HEK293 (cell line): ENCODE measurements at regions of chr14 and their contacts with region 1.

Region 1: DNA sequence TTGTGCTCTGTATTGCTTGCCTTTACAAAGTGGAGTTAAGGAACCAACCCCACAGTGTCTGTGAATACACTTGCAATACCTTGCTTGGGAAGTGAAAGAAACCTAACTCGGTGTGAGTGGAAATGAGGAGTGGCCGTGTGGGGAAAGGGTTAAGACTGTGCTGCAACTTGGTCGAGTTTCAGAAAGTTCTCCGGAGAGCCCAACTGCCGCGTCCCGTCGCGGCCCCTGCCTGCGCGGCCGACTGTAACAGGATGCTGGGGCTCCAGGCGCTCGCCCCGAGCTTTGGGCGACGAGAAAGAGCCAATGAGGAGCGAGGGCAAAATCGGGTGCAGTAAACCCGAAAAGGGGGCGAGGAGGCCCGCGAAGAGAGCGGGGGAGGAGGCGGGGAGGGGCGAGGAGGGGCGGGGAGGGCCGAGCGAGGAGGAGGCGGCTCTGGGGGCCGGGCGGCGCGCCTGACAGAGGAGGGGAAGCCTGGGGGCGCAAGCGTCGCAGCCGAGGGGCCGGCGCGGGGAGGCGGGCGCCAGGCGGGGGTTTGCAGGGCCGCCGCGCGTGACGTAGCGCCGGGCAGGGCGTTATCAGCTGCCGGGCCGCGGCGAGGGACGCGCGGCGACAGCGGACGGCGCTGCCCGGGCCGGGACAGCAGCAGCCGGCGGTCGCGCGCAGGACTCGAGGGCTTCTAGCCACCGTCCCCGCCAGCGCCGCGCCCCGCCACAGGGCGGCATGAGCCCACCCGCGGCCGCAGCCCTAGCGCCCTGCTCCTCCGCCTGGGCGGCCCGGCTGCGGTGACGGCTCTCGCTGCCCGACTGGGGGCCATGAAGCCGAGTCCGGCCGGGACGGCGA is at the start of gene DACT1:
- H3K4me3 ChIP-seq: peak within 1 kb of the TSS; percentile 71
- H3K27ac ChIP-seq: peak within 1 kb of the TSS; percentile 100
- H3K4me1 ChIP-seq: peaks cover 24% of the 10 kb centered on the region
- CTCF ChIP-seq: no peak

Region 2: GRCh38 chr14:58607946-58608306 is 29.7 kb before region 1 on chr14:
- CTCF ChIA-PET with region 1: no interaction called
- POLR2A ChIA-PET with region 1: no interaction called
- H3K4me3 ChIP-seq: no peak overlapping the region
- H3K27ac ChIP-seq: no peak overlapping the region
- H3K4me1 ChIP-seq: no peaks in the 10 kb centered on the region
- CTCF ChIP-seq: no peak

Region 3: DNA sequence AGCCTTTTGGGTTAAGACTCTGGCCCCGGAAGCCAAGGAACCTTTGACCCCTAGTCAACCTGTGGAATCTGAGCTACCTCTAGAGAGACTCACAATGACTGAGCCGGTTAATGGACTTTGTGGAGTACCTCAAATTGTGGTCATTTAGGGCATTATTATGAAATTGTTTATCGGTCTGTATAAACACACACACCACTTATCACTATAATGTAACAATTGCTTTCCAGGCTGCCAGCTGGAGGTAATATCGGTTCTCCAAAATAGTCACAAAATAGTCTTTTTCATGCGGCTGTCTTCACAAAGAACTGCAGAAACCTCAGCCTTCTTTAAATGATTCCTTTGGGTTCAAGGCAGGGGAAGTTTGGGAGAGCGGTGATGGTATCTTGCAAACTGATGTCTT is 144.4 kb after region 1 on chr14:
- CTCF ChIA-PET with region 1: no interaction called
- POLR2A ChIA-PET with region 1: no interaction called
- H3K4me3 ChIP-seq: no peak overlapping the region
- H3K27ac ChIP-seq: no peak overlapping the region
- H3K4me1 ChIP-seq: peaks cover 7% of the 10 kb centered on the region
- CTCF ChIP-seq: no peak

Region 4: GRCh38 chr14:58829594-58829993 is 192.0 kb after region 1 on chr14:
- CTCF ChIA-PET with region 1: interaction called, 10 read pairs
- POLR2A ChIA-PET with region 1: no interaction called
- H3K4me3 ChIP-seq: no peak overlapping the region
- H3K27ac ChIP-seq: peak overlapping the region; percentile 71
- H3K4me1 ChIP-seq: peaks cover 17% of the 10 kb centered on the region
- CTCF ChIP-seq: no peak

Region 5: GRCh38 chr14:59020382-59020781 is 382.8 kb after region 1 on chr14:
- CTCF ChIA-PET with region 1: interaction called, 10 read pairs
- POLR2A ChIA-PET with region 1: no interaction called
- H3K4me3 ChIP-seq: no peak overlapping the region
- H3K27ac ChIP-seq: no peak overlapping the region
- H3K4me1 ChIP-seq: no peaks in the 10 kb centered on the region; the same call in 1 of the 2 replicates
- CTCF ChIP-seq: no peak

Region 6: DNA sequence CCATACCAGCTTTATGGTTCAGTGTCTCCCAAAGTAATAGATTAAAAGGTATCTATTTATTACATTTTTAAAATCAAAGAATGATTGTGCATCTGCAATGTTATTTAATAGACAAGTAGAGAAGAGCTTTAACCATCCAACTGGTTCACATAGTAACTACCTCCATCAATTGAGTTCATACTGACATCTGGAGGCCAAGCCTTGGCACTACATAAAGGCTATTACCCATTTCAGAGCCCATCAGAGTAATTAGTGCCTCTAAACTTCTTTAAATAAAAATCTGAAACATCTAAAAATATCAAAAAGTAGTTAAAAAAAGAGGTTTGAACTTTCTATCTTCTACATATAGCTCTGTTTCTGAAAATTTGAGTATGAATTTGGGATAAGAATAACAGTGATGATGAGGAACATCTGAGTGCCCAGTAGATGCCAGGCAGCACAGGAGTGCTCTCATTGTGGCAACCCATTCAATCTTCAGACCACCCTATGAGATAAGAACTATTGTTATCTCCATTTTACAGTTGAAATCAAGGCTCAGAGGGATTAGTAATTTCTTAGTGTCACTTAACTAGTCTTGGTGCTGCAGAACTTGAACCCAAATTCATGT is 417.9 kb after region 1 on chr14:
- CTCF ChIA-PET with region 1: interaction called, 11 read pairs
- POLR2A ChIA-PET with region 1: no interaction called
- H3K4me3 ChIP-seq: no peak overlapping the region
- H3K27ac ChIP-seq: no peak overlapping the region
- H3K4me1 ChIP-seq: no peaks in the 10 kb centered on the region
- CTCF ChIP-seq: no peak